ENCODE measurements at regions of chr3 and their contacts with region 1.

Region 1: GRCh38 chr3:107064445-107065060 is 312.7 kb upstream of the CCDC54 start:
- DNase-seq: peak; percentile 79
- ATAC-seq: peak; percentile 89
- H3K4me3 Mint-ChIP-seq: no peak overlapping the region
- H3K27ac Mint-ChIP-seq: no peak overlapping the region
- H3K4me1 Mint-ChIP-seq: peaks cover 17% of the 10 kb centered on the region
- H3K27me3 Mint-ChIP-seq: peaks cover 11% of the 10 kb centered on the region
- CTCF ChIP-seq: peak; percentile 85

Region 2: DNA sequence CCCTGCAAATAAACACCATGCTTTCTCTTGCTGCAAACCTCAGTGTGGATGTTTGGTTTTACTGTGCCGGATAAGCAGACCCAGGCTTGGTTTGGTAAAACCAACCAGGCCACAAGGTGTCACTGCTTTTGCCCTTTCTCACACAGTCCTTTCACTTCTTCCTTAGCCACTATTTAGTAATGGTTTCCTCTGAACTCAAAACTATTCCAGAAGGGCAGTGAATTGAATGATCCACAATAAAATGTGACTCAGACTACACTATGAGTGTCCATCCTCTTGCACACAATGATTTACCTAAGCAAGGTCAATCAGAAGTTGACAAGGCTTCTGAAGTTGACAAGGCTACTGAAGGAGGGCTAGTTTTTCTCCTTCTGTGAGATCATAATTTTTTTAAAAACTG is 239.7 kb before region 1 on chr3:
- CTCF ChIA-PET with region 1: interaction called, 9 read pairs
- POLR2A ChIA-PET with region 1: no interaction called
- intact Hi-C with region 1: loop called (anchors 5 kb)
- DNase-seq: peak; percentile 29
- ATAC-seq: no peak
- H3K4me3 Mint-ChIP-seq: no peak overlapping the region
- H3K27ac Mint-ChIP-seq: no peak overlapping the region
- H3K4me1 Mint-ChIP-seq: peaks cover 2% of the 10 kb centered on the region
- H3K27me3 Mint-ChIP-seq: no peaks in the 10 kb centered on the region
- CTCF ChIP-seq: peak; percentile 21

Region 3: DNA sequence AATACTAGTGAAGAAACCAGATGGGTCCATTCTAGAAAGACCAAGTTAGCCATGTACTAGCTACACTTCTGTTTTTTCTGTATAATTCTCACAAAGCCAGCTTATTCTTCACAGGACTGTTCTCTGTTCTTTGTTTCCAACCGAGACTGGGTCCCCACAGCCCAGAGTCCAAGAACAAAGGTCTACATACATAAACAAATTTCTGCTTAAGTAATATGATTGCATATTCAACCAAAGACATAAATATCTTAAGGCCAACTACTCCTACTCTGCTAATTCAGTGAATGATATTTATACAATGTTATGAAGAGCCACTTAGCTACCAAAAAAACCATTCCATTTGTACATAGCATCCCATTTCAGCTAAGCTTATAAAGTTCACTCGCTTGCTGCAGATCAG is 12.8 kb after region 1 on chr3:
- CTCF ChIA-PET with region 1: interaction called, 18 read pairs
- POLR2A ChIA-PET with region 1: interaction called, 3 read pairs
- intact Hi-C with region 1: no loop called
- DNase-seq: no peak
- ATAC-seq: no peak
- H3K4me3 Mint-ChIP-seq: no peak overlapping the region
- H3K27ac Mint-ChIP-seq: no peak overlapping the region
- H3K4me1 Mint-ChIP-seq: no peaks in the 10 kb centered on the region
- H3K27me3 Mint-ChIP-seq: no peaks in the 10 kb centered on the region
- CTCF ChIP-seq: no peak